ENCODE measurements at regions of chr1 and their contacts with region 1.

Region 1: DNA sequence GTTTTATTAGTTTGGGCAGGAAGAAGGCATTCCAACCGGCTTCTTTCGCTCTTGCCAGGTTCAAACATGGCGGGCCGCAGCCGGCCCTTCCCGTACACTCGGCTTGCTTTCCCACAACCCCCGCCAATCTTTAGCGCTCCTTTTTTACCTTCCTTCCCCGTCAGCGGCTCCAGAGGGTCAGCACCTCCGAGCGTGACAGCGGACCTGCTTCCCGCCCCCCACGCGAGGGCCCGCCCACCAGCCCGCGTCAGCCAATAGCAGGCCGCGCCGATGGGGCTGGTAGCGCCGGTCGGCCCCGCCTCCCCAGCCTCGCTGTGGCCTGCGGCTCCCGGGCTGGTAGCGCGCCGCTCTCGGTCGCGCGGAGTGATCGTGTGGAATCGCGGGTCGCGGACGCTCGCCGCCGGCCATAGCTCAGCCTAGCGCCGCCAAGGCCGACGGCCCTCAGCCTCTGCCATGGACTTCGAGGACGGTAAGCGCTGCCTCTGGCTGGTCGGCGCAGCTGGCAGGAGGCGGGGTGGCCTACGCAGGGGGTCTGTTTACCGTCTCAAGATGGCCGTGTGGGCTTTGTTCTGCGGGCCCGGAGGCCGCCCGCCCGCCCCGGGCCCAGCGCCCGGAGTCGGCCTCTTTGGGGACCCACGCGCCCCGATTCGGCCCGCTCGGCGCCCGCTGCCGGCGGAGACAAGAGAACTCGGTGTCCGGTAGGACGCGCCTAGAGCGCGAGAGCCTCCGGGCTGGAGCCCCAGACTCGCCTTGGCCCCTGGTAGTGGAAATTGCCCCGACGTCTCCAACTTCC is at the start of gene ZNF326:
- DNase-seq: peak; percentile 89 to 96 (median 92)
- H3K4me3 ChIP-seq: peak within 1 kb of the TSS; percentile 77 to 95
- H3K4me3 Mint-ChIP-seq: peak within 1 kb of the TSS; percentile 92 to 100 (median 98)
- H3K27ac ChIP-seq: peak within 1 kb of the TSS; percentile 83
- H3K27ac Mint-ChIP-seq: peak within 1 kb of the TSS; percentile 87 to 99 (median 95)
- H3K4me1 ChIP-seq: peaks cover 36% of the 10 kb centered on the region
- H3K4me1 Mint-ChIP-seq: peaks cover 21 to 41% (median 31%) of the 10 kb centered on the region in 4 donors
- H3K27me3 ChIP-seq: no peaks in the 10 kb centered on the region
- H3K27me3 Mint-ChIP-seq: no peaks in the 10 kb centered on the region
- total RNA-seq, gene ZNF326: 17.4 to 20.6 TPM

Region 2: GRCh38 chr1:88683541-88684481 is 1311.2 kb before region 1 on chr1 and contains the start of gene PKN2:
- CTCF ChIA-PET with region 1: no interaction called
- POLR2A ChIA-PET with region 1: no interaction called
- intact Hi-C with region 1: loop called (anchors 5 kb)
- DNase-seq: peak; percentile 97 to 98 (median 98)
- H3K4me3 ChIP-seq: peak within 1 kb of the TSS; percentile 43 to 82
- H3K4me3 Mint-ChIP-seq: peak within 1 kb of the TSS; percentile 95 to 99 (median 97)
- H3K27ac ChIP-seq: peak within 1 kb of the TSS; percentile 85
- H3K27ac Mint-ChIP-seq: peak within 1 kb of the TSS; percentile 96 to 99 (median 98)
- H3K4me1 ChIP-seq: peaks cover 39% of the 10 kb centered on the region
- H3K4me1 Mint-ChIP-seq: peaks cover 15 to 58% (median 24%) of the 10 kb centered on the region in 4 donors
- H3K27me3 ChIP-seq: no peaks in the 10 kb centered on the region
- H3K27me3 Mint-ChIP-seq: no peaks in the 10 kb centered on the region
- total RNA-seq, gene PKN2: 38.6 to 42.0 TPM

Region 3: DNA sequence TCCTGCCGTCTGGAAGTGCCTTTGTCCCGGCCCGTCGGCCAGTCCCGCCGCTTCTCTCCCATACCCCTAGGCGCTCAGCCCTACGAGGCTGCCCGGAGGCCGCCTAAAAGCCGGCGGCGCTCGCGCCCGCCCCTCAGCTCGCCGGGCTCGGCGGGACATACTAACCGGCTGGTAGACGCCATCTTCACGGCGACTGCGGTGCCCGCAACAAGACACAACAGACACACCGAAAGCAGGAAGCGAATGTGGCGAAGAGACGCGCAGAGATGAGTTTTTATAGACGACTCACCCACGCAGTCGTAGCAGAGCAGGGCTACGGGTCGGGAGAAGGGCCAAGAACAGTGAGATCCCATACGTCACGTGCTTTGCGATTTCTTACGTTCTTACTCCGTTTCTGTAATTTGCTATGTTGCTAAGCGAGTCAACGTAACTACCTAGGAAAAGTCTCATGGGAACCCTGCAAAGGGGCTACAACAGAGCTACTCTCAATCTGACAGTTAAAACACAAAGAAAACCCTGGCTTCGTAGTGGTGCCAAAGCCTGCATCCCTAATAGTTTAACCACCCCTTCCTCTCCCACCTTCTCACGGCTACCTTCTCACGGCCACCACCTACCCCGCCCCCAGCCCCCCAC is 1103.6 kb before region 1 on chr1 and contains the start of gene GTF2B:
- CTCF ChIA-PET with region 1: no interaction called
- POLR2A ChIA-PET with region 1: interaction called, 3 read pairs
- intact Hi-C with region 1: loop called (anchors 5 kb)
- DNase-seq: peak; percentile 92 to 96 (median 95)
- H3K4me3 ChIP-seq: peak within 1 kb of the TSS; percentile 84 to 90
- H3K4me3 Mint-ChIP-seq: peak within 1 kb of the TSS; percentile 90 to 99 (median 98)
- H3K27ac ChIP-seq: peak within 1 kb of the TSS; percentile 94
- H3K27ac Mint-ChIP-seq: peak within 1 kb of the TSS; percentile 94 to 99 (median 98)
- H3K4me1 ChIP-seq: peaks cover 42% of the 10 kb centered on the region
- H3K4me1 Mint-ChIP-seq: peaks cover 33 to 50% (median 42%) of the 10 kb centered on the region in 4 donors
- H3K27me3 ChIP-seq: no peaks in the 10 kb centered on the region
- H3K27me3 Mint-ChIP-seq: peaks cover 0 to 2% of the 10 kb centered on the region in 2 donors
- total RNA-seq, gene GTF2B: 43.9 to 48.3 TPM

Region 4: GRCh38 chr1:89605692-89606091 is 389.3 kb before region 1 on chr1:
- CTCF ChIA-PET with region 1: no interaction called
- POLR2A ChIA-PET with region 1: interaction called, 3 read pairs
- intact Hi-C with region 1: loop called (anchors 10 kb)
- DNase-seq: no peak
- H3K4me3 ChIP-seq: peak overlapping the region in 1 of 2 donors; percentile 0
- H3K4me3 Mint-ChIP-seq: peak overlapping the region in 6 of 8 donors; percentile 29 to 97 (median 64)
- H3K27ac ChIP-seq: peak overlapping the region; percentile 84
- H3K27ac Mint-ChIP-seq: peak overlapping the region; percentile 98 to 100 (median 99)
- H3K4me1 ChIP-seq: peaks cover 95% of the 10 kb centered on the region
- H3K4me1 Mint-ChIP-seq: peaks cover 73 to 98% (median 87%) of the 10 kb centered on the region in 4 donors
- H3K27me3 ChIP-seq: no peaks in the 10 kb centered on the region
- H3K27me3 Mint-ChIP-seq: no peaks in the 10 kb centered on the region

Region 5: GRCh38 chr1:89820422-89821321 is 174.3 kb before region 1 on chr1 and contains the start of gene LRRC8D:
- CTCF ChIA-PET with region 1: no interaction called
- POLR2A ChIA-PET with region 1: no interaction called
- intact Hi-C with region 1: loop called (anchors 2 kb)
- DNase-seq: peak; percentile 54 to 78 (median 63)
- H3K4me3 ChIP-seq: peak within 1 kb of the TSS; percentile 44 to 60
- H3K4me3 Mint-ChIP-seq: peak within 1 kb of the TSS; percentile 87 to 92 (median 90)
- H3K27ac ChIP-seq: peak within 1 kb of the TSS; percentile 65
- H3K27ac Mint-ChIP-seq: peak within 1 kb of the TSS; percentile 85 to 92 (median 88)
- H3K4me1 ChIP-seq: peaks cover 11% of the 10 kb centered on the region
- H3K4me1 Mint-ChIP-seq: peaks cover 23 to 32% (median 25%) of the 10 kb centered on the region in 4 donors
- H3K27me3 ChIP-seq: no peaks in the 10 kb centered on the region
- H3K27me3 Mint-ChIP-seq: no peaks in the 10 kb centered on the region
- total RNA-seq, gene LRRC8D: 56.8 to 63.2 TPM

Region 6: GRCh38 chr1:90007979-90008404 is 13.0 kb after region 1 on chr1:
- CTCF ChIA-PET with region 1: no interaction called
- POLR2A ChIA-PET with region 1: no interaction called
- intact Hi-C with region 1: no loop called
- DNase-seq: no peak
- H3K4me3 ChIP-seq: no peak overlapping the region
- H3K4me3 Mint-ChIP-seq: no peak overlapping the region
- H3K27ac ChIP-seq: no peak overlapping the region
- H3K27ac Mint-ChIP-seq: no peak overlapping the region
- H3K4me1 ChIP-seq: no peaks in the 10 kb centered on the region
- H3K4me1 Mint-ChIP-seq: peaks cover 15 to 33% (median 18%) of the 10 kb centered on the region in 4 donors
- H3K27me3 ChIP-seq: no peaks in the 10 kb centered on the region
- H3K27me3 Mint-ChIP-seq: no peaks in the 10 kb centered on the region